WTC11 (cell line): ENCODE measurements at regions of chr1 and their contacts with region 1.

Region 1: DNA sequence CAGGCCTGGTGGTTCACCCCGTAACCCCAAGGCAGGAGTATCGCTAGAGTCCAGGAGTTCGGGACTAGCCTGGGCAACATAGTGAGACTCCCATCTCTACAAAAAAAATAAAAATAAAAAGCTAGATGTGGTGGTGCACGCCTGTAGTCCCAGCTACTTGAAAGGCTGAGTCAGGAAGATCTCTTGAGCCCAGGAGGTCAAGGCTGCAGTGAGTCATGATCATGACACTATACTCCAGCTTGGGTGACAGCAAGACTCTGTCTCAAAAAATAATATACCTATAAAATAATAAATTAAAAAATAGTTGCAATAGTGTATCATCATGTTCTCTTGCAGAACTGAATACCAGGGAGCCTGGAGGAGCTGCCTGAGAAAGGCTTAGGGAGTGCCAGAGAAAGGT is 19.9 kb upstream of the TMEM39B start:
- DNase-seq: no peak
- ATAC-seq: no peak
- H3K4me3 Mint-ChIP-seq: no peak overlapping the region
- H3K27ac Mint-ChIP-seq: no peak overlapping the region
- H3K4me1 Mint-ChIP-seq: no peaks in the 10 kb centered on the region
- H3K27me3 Mint-ChIP-seq: no peaks in the 10 kb centered on the region
- CTCF ChIP-seq: no peak

Region 2: DNA sequence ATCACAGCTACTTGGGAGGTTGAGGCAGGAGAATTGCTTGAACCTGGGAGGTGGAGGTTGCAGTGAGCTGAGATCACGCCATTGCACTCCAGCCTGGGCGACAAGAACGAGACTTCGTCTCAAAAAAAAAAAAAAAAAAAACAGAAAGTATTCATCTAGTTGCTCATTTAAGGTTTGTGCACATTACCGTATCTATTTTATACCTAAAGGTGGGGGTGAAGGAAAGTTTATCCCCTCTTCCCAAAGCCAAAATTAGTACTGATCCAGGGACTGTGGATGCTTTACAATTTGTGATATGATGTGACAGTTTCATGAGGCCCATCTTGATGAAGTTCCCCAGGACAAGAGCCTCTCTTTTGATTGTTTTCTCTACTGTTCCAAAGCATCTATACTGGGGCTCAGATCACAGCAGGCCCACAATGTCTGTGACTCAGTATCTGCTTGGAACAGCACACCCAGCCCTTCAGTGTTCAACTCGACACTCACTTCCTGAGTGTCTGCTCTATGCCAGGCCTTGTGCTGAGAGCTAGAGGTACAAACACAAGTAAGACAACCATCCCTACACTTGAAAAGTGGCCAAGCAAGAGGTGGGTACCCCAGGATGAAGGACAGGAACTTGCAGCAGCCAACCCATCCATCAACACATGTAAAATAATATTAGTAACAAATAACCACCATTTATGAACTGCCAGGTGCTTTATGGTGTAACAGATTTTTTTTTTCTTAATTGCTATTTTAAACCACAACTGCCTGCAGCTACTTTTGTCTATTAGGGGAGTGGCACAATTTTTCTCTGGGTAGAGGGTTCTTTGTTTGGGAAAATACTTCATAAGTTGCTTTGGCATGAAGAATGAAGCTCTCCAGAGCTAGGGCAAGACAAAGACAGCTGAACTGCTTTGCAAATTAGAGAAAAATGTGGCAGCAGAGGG is 68.2 kb before region 1 on chr1:
- CTCF ChIA-PET with region 1: no interaction called
- POLR2A ChIA-PET with region 1: interaction called, 12 read pairs
- DNase-seq: no peak
- ATAC-seq: no peak
- H3K4me3 Mint-ChIP-seq: no peak overlapping the region
- H3K27ac Mint-ChIP-seq: no peak overlapping the region
- H3K4me1 Mint-ChIP-seq: peaks cover 24% of the 10 kb centered on the region
- H3K27me3 Mint-ChIP-seq: no peaks in the 10 kb centered on the region
- CTCF ChIP-seq: no peak